K562 (cell line): ENCODE measurements at regions of chr9 and their contacts with region 1.

Region 1: GRCh38 chr9:123929870-123930831 is at the start of gene DENND1A:
- DNase-seq: peak; percentile 95 to 98 (median 97)
- ATAC-seq: peak; percentile 93
- H3K4me3 ChIP-seq: peak within 1 kb of the TSS; percentile 72
- H3K27ac ChIP-seq: peak within 1 kb of the TSS; percentile 66
- H3K4me1 ChIP-seq: peaks cover 5 to 23% of the 10 kb centered on the region in 2 experiments
- H3K27me3 ChIP-seq: no peaks in the 10 kb centered on the region
- CTCF ChIP-seq: no peak
- EP300 ChIP-seq: no peak
- POLR2A ChIP-seq: peak; percentile 74
- RAD21 ChIP-seq: no peak
- polyA plus RNA-seq, gene DENND1A: 7.6 to 7.7 TPM

Region 2: DNA sequence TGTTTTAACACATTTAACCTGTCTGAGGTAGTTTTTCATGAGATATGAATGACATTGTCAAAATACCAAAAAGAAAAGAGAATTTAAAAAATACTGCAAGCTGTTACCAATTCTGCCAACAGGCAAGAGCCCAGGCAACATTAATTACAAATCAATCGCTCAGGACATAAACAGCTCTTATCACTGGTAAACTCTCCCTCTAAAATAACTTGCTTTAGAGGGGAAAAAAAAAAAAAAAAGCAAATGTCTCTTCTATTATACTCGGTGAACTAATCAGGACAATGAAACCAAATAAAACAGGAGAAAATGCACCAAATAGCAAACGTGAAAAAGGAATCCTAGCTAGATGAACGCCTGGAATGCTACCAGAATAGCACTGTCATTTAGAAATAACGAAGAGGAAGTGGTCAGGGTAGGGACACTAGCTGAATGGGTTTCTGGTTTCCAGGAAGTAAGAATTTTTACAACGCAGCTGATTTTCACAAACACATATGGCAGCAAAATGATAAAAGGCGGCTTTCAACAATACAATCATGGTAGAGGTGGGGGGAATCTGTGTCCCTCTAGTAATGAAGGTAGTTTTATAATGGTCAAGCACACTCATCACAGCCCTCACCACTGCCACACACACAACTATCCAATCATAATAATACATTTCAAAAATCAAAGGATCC is 95.1 kb before region 1 on chr9:
- CTCF ChIA-PET with region 1: no interaction called
- POLR2A ChIA-PET with region 1: interaction called, 8 read pairs
- in situ Hi-C with region 1: no loop called
- intact Hi-C with region 1: loop called (anchors 10 kb)
- DNase-seq: peak in 3 of 4 experiments; percentile 9 to 75 (median 68)
- ATAC-seq: peak; percentile 89
- H3K4me3 ChIP-seq: peak overlapping the region; percentile 19
- H3K27ac ChIP-seq: peak overlapping the region; percentile 80
- H3K4me1 ChIP-seq: peaks cover 5 to 23% of the 10 kb centered on the region in 2 experiments
- H3K27me3 ChIP-seq: no peaks in the 10 kb centered on the region
- CTCF ChIP-seq: no peak
- EP300 ChIP-seq: peak; percentile 51
- POLR2A ChIP-seq: peak; percentile 65; the same call in 1 of the 2 replicates
- RAD21 ChIP-seq: no peak

Region 3: DNA sequence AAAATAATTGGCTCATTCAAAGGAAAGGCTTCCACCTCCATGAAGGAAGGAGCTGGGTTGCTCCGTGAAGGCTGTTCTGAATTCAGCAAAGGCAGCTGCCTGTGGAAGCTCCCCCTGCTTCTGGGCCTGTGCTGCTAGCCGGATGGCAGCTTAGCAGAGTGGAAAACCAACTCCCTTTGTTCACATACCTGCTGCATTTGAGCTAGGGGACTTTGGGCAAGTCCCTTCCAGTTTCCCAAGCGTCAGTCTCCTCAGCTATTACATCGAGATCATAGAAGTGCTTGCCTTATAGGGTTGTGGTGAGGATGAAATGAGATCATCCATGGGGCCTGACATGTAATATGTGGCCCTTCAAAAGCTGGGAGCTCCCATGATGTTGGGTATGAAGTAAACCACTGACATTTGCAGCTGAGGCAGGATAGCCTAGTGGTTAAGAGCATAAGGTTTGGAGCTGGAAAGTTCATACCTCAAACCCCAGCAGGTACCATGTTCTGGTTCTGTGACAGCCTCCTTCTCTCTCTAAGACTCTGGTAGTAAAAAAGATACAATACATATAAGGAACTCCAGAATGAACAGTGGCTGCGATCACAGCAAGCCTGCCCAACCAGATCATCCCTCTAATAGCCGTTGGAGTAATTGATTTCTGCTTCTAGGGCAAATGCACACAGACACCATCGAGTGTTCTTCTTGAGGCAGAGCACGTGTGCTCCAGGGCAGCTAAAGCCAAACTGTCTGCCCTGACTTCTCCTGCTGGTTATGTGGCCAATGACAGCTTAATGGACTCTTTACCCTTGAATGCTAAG is 10.8 kb after region 1 on chr9:
- CTCF ChIA-PET with region 1: no interaction called
- POLR2A ChIA-PET with region 1: interaction called, 10 read pairs
- in situ Hi-C with region 1: no loop called
- intact Hi-C with region 1: no loop called
- DNase-seq: no peak
- ATAC-seq: peak; percentile 67; the same call in 2 of the 3 replicates
- H3K4me3 ChIP-seq: no peak overlapping the region
- H3K27ac ChIP-seq: no peak overlapping the region
- H3K4me1 ChIP-seq: no peaks in the 10 kb centered on the region
- H3K27me3 ChIP-seq: peaks cover 7 to 25% of the 10 kb centered on the region in 2 experiments
- CTCF ChIP-seq: peak in 1 of 3 experiments; percentile 16; a peak in 2 of 6 replicates
- EP300 ChIP-seq: no peak
- POLR2A ChIP-seq: no peak
- RAD21 ChIP-seq: 0 out of 4 replicates have a peak, but pooled peaks of 1 of the 2 experiments have one; percentile 14